Activated CD4-positive, alpha-beta memory T cell treated with anti-CD3 and anti-CD28 coated beads, Interleukin-2, amount 10 ng/mL, durations not matched to agents 7 days and 5 days (primary cell): ENCODE measurements at regions of chr13 and their contacts with region 1.

Region 1: GRCh38 chr13:113307491-113307890 is 10.5 kb downstream of the LAMP1 start:
- DNase-seq: no peak
- H3K4me3 Mint-ChIP-seq: no peak overlapping the region
- H3K27ac Mint-ChIP-seq: no peak overlapping the region
- H3K4me1 Mint-ChIP-seq: no peaks in the 10 kb centered on the region
- H3K27me3 Mint-ChIP-seq: no peaks in the 10 kb centered on the region

Region 2: GRCh38 chr13:113296842-113297369 is 10.6 kb before region 1 on chr13 and contains the start of gene LAMP1:
- CTCF ChIA-PET with region 1: no interaction called
- POLR2A ChIA-PET with region 1: interaction called, 10 read pairs
- DNase-seq: peak; percentile 98
- H3K4me3 Mint-ChIP-seq: peak within 1 kb of the TSS; percentile 92
- H3K27ac Mint-ChIP-seq: peak within 1 kb of the TSS; percentile 94
- H3K4me1 Mint-ChIP-seq: peaks cover 35% of the 10 kb centered on the region
- H3K27me3 Mint-ChIP-seq: peaks cover 26% of the 10 kb centered on the region
- total RNA-seq, gene LAMP1: 79.5 to 80.7 TPM

Region 3: DNA sequence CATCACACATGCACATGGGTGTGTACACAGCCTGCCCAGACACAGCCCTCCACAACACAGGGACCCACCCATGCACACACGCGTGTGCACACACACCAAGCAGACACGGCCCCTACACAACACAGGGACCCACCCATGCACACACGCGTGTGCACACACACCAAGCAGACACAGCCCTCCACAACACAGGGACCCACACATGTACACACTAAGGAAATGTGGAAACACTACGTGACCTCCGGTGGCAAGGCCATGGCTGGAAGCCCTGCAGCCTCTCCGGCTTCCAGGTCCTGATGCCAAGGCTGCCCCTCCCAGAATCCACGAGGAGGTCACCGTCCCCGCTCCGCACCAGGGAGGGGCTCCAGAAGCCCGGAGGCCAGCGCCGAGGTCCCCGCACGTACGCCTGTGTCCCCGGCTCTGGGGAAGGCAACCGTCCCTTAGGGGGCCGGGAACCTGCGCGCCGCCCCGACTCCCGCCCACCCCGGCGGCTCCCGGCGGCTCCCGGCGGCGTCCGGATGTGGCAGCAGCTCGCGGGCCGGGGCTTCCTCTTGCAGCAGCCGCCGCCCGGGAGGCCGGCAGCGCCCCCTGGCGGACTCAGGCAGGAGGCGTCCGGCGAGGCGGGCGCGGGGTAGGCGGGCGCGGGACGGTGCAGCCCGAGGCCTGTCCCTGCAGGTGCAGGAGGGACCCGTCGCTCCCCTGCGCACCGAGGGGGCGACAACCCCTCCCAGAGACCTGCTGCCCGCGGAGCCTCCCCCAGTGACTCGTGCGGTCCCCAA is 86.3 kb after region 1 on chr13:
- CTCF ChIA-PET with region 1: no interaction called
- POLR2A ChIA-PET with region 1: no interaction called
- DNase-seq: peak; percentile 86
- H3K4me3 Mint-ChIP-seq: peak overlapping the region; percentile 81
- H3K27ac Mint-ChIP-seq: peak overlapping the region; percentile 68
- H3K4me1 Mint-ChIP-seq: peaks cover 6% of the 10 kb centered on the region
- H3K27me3 Mint-ChIP-seq: peaks cover 2% of the 10 kb centered on the region

Region 4: GRCh38 chr13:113625965-113626721 is 318.7 kb after region 1 on chr13:
- CTCF ChIA-PET with region 1: no interaction called
- POLR2A ChIA-PET with region 1: no interaction called
- DNase-seq: no peak
- H3K4me3 Mint-ChIP-seq: no peak overlapping the region
- H3K27ac Mint-ChIP-seq: no peak overlapping the region
- H3K4me1 Mint-ChIP-seq: no peaks in the 10 kb centered on the region
- H3K27me3 Mint-ChIP-seq: no peaks in the 10 kb centered on the region